ENCODE measurements at regions of chr13 and their contacts with region 1.

Region 1: DNA sequence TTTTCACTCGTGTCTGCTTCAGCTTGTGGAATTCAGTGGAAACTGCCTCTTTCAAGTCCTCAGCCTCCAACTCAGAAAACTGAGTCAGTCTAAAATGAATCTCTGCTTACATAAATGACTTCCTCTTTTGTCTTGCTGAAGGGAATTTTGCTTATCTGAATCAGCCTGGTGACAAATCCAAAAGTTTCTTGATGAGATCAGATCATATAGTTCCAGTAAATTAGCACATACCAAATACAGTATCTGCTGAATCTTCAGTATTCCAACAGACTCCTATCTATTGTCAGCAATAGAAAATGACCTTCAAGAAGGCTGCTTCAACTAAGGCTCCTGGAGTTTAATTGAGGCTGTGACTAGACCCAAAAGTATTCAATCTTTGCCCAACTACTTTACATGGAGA is 290.0 kb downstream of the MZT1 start:
- DNase-seq: no peak
- H3K4me3 ChIP-seq: no peak overlapping the region
- H3K27ac ChIP-seq: no peak overlapping the region
- H3K4me1 ChIP-seq: no peaks in the 10 kb centered on the region
- H3K27me3 ChIP-seq: no peaks in the 10 kb centered on the region
- CTCF ChIP-seq: no peak
- POLR2A ChIP-seq: no peak

Region 2: DNA sequence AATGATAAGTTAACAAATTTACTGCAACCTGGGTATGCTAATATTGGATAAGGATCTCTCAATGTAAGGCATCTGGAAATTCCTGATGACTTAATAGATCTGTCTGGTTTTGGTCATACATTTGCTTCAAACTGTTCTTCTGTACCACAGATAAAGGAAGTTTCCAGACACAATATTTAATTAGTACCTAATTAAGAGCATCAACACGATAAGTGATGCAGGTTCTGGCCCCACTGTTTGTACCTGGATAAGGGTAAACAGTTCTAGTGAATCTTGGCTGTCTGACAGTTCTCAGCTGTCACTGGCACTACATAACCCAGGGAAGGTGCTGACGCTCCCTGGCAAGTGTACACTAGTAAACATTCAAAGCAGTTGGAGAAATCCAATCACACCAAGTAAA is 124.3 kb after region 1 on chr13:
- intact Hi-C with region 1: loop called (anchors 5 kb)
- DNase-seq: no peak
- H3K4me3 ChIP-seq: no peak overlapping the region
- H3K27ac ChIP-seq: no peak overlapping the region
- H3K4me1 ChIP-seq: no peaks in the 10 kb centered on the region
- H3K27me3 ChIP-seq: no peaks in the 10 kb centered on the region
- CTCF ChIP-seq: no peak
- POLR2A ChIP-seq: no peak

Region 3: DNA sequence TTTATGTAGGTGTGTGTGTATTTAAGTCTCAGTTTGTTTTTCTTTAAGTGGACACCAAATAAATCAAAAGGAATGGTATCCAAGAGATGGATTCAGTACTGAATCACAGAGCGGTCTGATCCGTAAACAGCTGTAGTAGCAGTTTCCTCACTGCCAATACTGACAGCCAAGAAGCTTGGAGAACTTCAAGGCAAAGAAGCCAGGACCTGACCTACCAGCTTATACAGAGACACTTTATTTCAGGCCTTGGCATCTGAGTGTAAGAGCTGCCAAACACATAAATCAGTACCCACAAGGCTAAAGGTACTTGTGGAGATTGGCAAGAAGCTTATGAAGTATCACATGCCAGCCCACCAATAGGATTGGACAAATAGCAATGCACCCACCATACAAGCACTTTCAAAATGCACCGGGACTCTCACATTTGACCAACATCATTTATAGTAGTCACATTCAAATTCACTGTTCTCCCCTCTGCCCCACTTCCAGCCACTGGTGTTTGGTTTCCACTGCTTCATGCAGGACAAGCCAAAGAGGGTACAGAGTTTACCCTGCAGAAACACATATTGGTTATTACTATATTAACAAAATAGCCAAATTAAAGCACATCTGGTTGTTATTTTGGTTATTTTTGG is 1338.8 kb after region 1 on chr13:
- intact Hi-C with region 1: no loop called
- DNase-seq: no peak
- H3K4me3 ChIP-seq: no peak overlapping the region
- H3K27ac ChIP-seq: no peak overlapping the region
- H3K4me1 ChIP-seq: no peaks in the 10 kb centered on the region
- H3K27me3 ChIP-seq: no peaks in the 10 kb centered on the region
- CTCF ChIP-seq: no peak
- POLR2A ChIP-seq: no peak

Measured in breast epithelium (tissue), 4 donors.